CD8-positive, alpha-beta memory T cell (primary cell): ENCODE measurements at regions of chr17 and their contacts with region 1.

Region 1: GRCh38 chr17:2244545-2245525 is 58.8 kb downstream of the SMG6 start:
- DNase-seq: peak; percentile 70 to 88 (median 73)
- H3K4me3 ChIP-seq: no peak overlapping the region
- H3K4me3 Mint-ChIP-seq: no peak overlapping the region
- H3K27ac ChIP-seq: no peak overlapping the region
- H3K27ac Mint-ChIP-seq: peak overlapping the region; percentile 21 to 90 (median 82)
- H3K4me1 ChIP-seq: no peaks in the 10 kb centered on the region
- H3K4me1 Mint-ChIP-seq: peaks cover 19 to 45% (median 34%) of the 10 kb centered on the region in 3 donors
- H3K27me3 ChIP-seq: no peaks in the 10 kb centered on the region
- H3K27me3 Mint-ChIP-seq: no peaks in the 10 kb centered on the region

Region 2: GRCh38 chr17:2064980-2065785 is 179.7 kb before region 1 on chr17:
- CTCF ChIA-PET with region 1: interaction called, 256 read pairs
- POLR2A ChIA-PET with region 1: interaction called, 4 read pairs
- DNase-seq: peak in 2 of 5 donors; percentile 33 to 72
- H3K4me3 ChIP-seq: no peak overlapping the region
- H3K4me3 Mint-ChIP-seq: peak overlapping the region in 4 of 7 donors; percentile 2 to 81 (median 31)
- H3K27ac ChIP-seq: no peak overlapping the region
- H3K27ac Mint-ChIP-seq: peak overlapping the region in 7 of 8 donors; percentile 18 to 89 (median 87)
- H3K4me1 ChIP-seq: peaks cover 20% of the 10 kb centered on the region
- H3K4me1 Mint-ChIP-seq: peaks cover 31 to 97% (median 45%) of the 10 kb centered on the region in 3 donors
- H3K27me3 ChIP-seq: no peaks in the 10 kb centered on the region
- H3K27me3 Mint-ChIP-seq: peaks cover 0 to 3% of the 10 kb centered on the region in 2 donors

Region 3: GRCh38 chr17:2090804-2091534 is 153.9 kb before region 1 on chr17:
- CTCF ChIA-PET with region 1: interaction called, 20 read pairs
- POLR2A ChIA-PET with region 1: no interaction called
- DNase-seq: no peak
- H3K4me3 ChIP-seq: no peak overlapping the region
- H3K4me3 Mint-ChIP-seq: peak overlapping the region in 6 of 7 donors; percentile 22 to 97 (median 92)
- H3K27ac ChIP-seq: no peak overlapping the region
- H3K27ac Mint-ChIP-seq: peak overlapping the region; percentile 12 to 99 (median 96)
- H3K4me1 ChIP-seq: peaks cover 39% of the 10 kb centered on the region
- H3K4me1 Mint-ChIP-seq: peaks cover 43 to 67% (median 55%) of the 10 kb centered on the region in 3 donors
- H3K27me3 ChIP-seq: no peaks in the 10 kb centered on the region
- H3K27me3 Mint-ChIP-seq: no peaks in the 10 kb centered on the region

Region 4: GRCh38 chr17:2215616-2216364 is 29.0 kb before region 1 on chr17:
- CTCF ChIA-PET with region 1: interaction called, 27 read pairs
- POLR2A ChIA-PET with region 1: interaction called, 5 read pairs
- DNase-seq: peak; percentile 48 to 84 (median 74)
- H3K4me3 ChIP-seq: peak overlapping the region; percentile 42
- H3K4me3 Mint-ChIP-seq: peak overlapping the region; percentile 46 to 89 (median 78)
- H3K27ac ChIP-seq: peak overlapping the region; percentile 52
- H3K27ac Mint-ChIP-seq: peak overlapping the region; percentile 93 to 100 (median 96)
- H3K4me1 ChIP-seq: peaks cover 55% of the 10 kb centered on the region
- H3K4me1 Mint-ChIP-seq: peaks cover 50 to 64% (median 60%) of the 10 kb centered on the region in 3 donors
- H3K27me3 ChIP-seq: no peaks in the 10 kb centered on the region
- H3K27me3 Mint-ChIP-seq: no peaks in the 10 kb centered on the region

Region 5: GRCh38 chr17:2259769-2260536 is 15.1 kb after region 1 on chr17:
- CTCF ChIA-PET with region 1: interaction called, 72 read pairs
- POLR2A ChIA-PET with region 1: interaction called, 7 read pairs
- DNase-seq: peak; percentile 24 to 79 (median 54)
- H3K4me3 ChIP-seq: peak overlapping the region; percentile 33
- H3K4me3 Mint-ChIP-seq: peak overlapping the region; percentile 63 to 90 (median 79)
- H3K27ac ChIP-seq: peak overlapping the region; percentile 52
- H3K27ac Mint-ChIP-seq: peak overlapping the region; percentile 93 to 98 (median 97)
- H3K4me1 ChIP-seq: peaks cover 69% of the 10 kb centered on the region
- H3K4me1 Mint-ChIP-seq: peaks cover 60 to 75% (median 66%) of the 10 kb centered on the region in 3 donors
- H3K27me3 ChIP-seq: no peaks in the 10 kb centered on the region
- H3K27me3 Mint-ChIP-seq: no peaks in the 10 kb centered on the region

Region 6: DNA sequence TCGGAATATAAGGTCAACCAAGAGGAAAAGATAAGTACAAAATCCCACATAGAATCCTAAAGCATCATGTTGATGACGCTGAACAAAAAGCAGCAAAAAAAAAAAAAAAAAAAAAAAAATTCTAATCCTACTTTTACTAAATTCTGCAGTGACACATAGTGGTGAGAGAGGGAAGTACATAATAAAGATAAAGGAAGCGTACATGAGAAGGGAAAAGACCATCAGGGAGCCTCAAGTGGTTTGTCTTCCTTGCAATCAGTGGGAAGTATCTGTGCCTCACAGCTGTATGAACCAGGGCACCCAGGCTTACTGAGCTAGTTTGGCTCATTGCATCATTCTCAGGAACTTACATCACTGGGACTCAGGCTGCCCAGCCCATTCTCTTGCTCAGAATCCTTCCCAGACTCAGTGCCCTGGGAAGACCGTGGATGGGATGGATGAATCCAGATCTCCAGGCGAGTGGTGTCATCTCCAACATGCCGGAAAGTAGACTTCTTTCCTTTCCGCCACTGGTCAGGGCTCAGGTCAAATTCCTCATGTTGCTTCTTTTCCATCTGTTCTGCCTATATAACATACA is 37.5 kb after region 1 on chr17:
- CTCF ChIA-PET with region 1: interaction called, 49 read pairs
- POLR2A ChIA-PET with region 1: no interaction called
- DNase-seq: peak in 2 of 5 donors; percentile 56 to 65
- H3K4me3 ChIP-seq: no peak overlapping the region
- H3K4me3 Mint-ChIP-seq: peak overlapping the region in 1 of 7 donors; percentile 24
- H3K27ac ChIP-seq: no peak overlapping the region
- H3K27ac Mint-ChIP-seq: peak overlapping the region in 7 of 8 donors; percentile 11 to 85 (median 57)
- H3K4me1 ChIP-seq: peaks cover 7% of the 10 kb centered on the region
- H3K4me1 Mint-ChIP-seq: peaks cover 7 to 14% (median 14%) of the 10 kb centered on the region in 3 donors
- H3K27me3 ChIP-seq: no peaks in the 10 kb centered on the region
- H3K27me3 Mint-ChIP-seq: no peaks in the 10 kb centered on the region

Region 7: GRCh38 chr17:2399572-2400473 is 155.0 kb after region 1 on chr17:
- CTCF ChIA-PET with region 1: no interaction called
- POLR2A ChIA-PET with region 1: no interaction called
- DNase-seq: peak; percentile 91 to 93 (median 92)
- H3K4me3 ChIP-seq: peak overlapping the region; percentile 96
- H3K4me3 Mint-ChIP-seq: peak overlapping the region; percentile 96 to 100 (median 98)
- H3K27ac ChIP-seq: peak overlapping the region; percentile 96
- H3K27ac Mint-ChIP-seq: peak overlapping the region; percentile 93 to 100 (median 100)
- H3K4me1 ChIP-seq: peaks cover 46% of the 10 kb centered on the region
- H3K4me1 Mint-ChIP-seq: peaks cover 36 to 56% (median 38%) of the 10 kb centered on the region in 3 donors
- H3K27me3 ChIP-seq: no peaks in the 10 kb centered on the region
- H3K27me3 Mint-ChIP-seq: peaks cover 0 to 3% of the 10 kb centered on the region in 2 donors